ENCODE measurements at regions of chr5 and their contacts with region 1.

Region 1: DNA sequence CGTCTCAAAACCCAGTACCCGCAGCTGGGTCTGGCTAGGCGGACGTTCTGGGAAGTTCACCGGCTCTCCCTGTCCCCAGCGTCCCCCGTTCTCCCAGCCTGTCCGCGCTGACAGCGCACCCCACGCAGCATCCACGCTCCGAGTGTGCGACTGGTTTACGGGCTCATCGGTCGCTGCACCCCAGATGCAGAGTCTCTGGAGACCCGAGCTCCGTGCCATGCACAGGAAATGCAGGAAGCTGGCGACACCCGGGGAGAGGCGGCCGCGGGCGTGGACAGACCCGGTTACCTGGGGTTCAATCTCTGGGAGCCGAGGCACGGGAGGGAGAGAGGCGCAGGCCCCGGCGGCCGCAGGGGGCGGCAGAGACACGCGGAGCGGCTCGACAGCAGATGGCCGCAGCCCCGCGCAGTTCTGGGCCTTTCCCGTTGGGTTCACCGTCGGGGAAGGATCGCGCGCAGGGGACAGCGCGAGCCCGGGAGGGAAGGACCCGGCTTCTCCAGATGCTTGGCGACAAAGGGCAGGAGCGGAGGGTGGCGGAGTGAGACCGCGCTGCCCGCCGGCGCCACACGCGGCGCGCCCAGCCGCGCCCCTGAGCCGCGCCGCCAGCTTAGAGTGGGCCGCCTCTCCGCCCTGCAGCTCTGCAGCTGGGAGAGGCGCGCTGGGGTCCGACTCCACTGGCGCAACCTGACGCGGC is 558 bp downstream of the SHROOM1 start:
- DNase-seq: peak; percentile 56
- ATAC-seq: peak; percentile 91
- H3K4me3 ChIP-seq: peak overlapping the region; percentile 84
- H3K27ac ChIP-seq: peak overlapping the region; percentile 52; the same call in 1 of the 2 replicates
- H3K4me1 ChIP-seq: peaks cover 4% of the 10 kb centered on the region; the same call in 1 of the 2 replicates
- H3K27me3 ChIP-seq: no peaks in the 10 kb centered on the region
- CTCF ChIP-seq: peak; percentile 88
- POLR2A ChIP-seq: peak; percentile 24; the same call in 1 of the 2 replicates
- RAD21 ChIP-seq: peak; percentile 82

Region 2: GRCh38 chr5:132651838-132652469 is 177.9 kb before region 1 on chr5:
- CTCF ChIA-PET with region 1: no interaction called
- POLR2A ChIA-PET with region 1: no interaction called
- dilution Hi-C with region 1: no loop called
- in situ Hi-C with region 1: no loop called
- intact Hi-C with region 1: no loop called
- DNase-seq: no peak
- ATAC-seq: no peak
- H3K4me3 ChIP-seq: no peak overlapping the region
- H3K27ac ChIP-seq: no peak overlapping the region
- H3K4me1 ChIP-seq: no peaks in the 10 kb centered on the region
- H3K27me3 ChIP-seq: peaks cover 11% of the 10 kb centered on the region; the same call in 1 of the 2 replicates
- CTCF ChIP-seq: no peak
- POLR2A ChIP-seq: no peak
- RAD21 ChIP-seq: no peak

Region 3: GRCh38 chr5:132662925-132663770 is 166.7 kb before region 1 on chr5:
- CTCF ChIA-PET with region 1: no interaction called
- POLR2A ChIA-PET with region 1: no interaction called
- dilution Hi-C with region 1: no loop called
- in situ Hi-C with region 1: no loop called
- intact Hi-C with region 1: no loop called
- DNase-seq: peak; percentile 21
- ATAC-seq: peak; percentile 86
- H3K4me3 ChIP-seq: no peak overlapping the region
- H3K27ac ChIP-seq: no peak overlapping the region
- H3K4me1 ChIP-seq: peaks cover 3% of the 10 kb centered on the region; the same call in 1 of the 2 replicates
- H3K27me3 ChIP-seq: no peaks in the 10 kb centered on the region
- CTCF ChIP-seq: no peak
- POLR2A ChIP-seq: no peak
- RAD21 ChIP-seq: no peak

Region 4: GRCh38 chr5:132883261-132883834 is 53.5 kb after region 1 on chr5:
- CTCF ChIA-PET with region 1: no interaction called
- POLR2A ChIA-PET with region 1: no interaction called
- dilution Hi-C with region 1: no loop called
- in situ Hi-C with region 1: no loop called
- intact Hi-C with region 1: loop called (anchors 1 kb)
- DNase-seq: peak; percentile 74
- ATAC-seq: peak; percentile 83
- H3K4me3 ChIP-seq: no peak overlapping the region
- H3K27ac ChIP-seq: no peak overlapping the region
- H3K4me1 ChIP-seq: no peaks in the 10 kb centered on the region
- H3K27me3 ChIP-seq: no peaks in the 10 kb centered on the region
- CTCF ChIP-seq: peak; percentile 67
- POLR2A ChIP-seq: no peak
- RAD21 ChIP-seq: peak; percentile 64